ENCODE measurements at regions of chr18 and their contacts with region 1.

Region 1: GRCh38 chr18:50878345-50879301 is at the start of gene ME2:
- DNase-seq: peak; percentile 80 to 94 (median 91)
- ATAC-seq: peak; percentile 87
- H3K4me3 ChIP-seq: peak within 1 kb of the TSS; percentile 87 to 95
- H3K4me3 Mint-ChIP-seq: peak within 1 kb of the TSS; percentile 96
- H3K27ac ChIP-seq: peak within 1 kb of the TSS; percentile 89 to 99
- H3K27ac Mint-ChIP-seq: peak within 1 kb of the TSS; percentile 99
- H3K4me1 ChIP-seq: peaks cover 31% of the 10 kb centered on the region
- H3K4me1 Mint-ChIP-seq: peaks cover 37% of the 10 kb centered on the region
- H3K27me3 ChIP-seq: no peaks in the 10 kb centered on the region
- H3K27me3 Mint-ChIP-seq: no peaks in the 10 kb centered on the region
- CTCF ChIP-seq: no peak
- total RNA-seq, gene ME2: 14.4 to 17.3 TPM

Region 2: DNA sequence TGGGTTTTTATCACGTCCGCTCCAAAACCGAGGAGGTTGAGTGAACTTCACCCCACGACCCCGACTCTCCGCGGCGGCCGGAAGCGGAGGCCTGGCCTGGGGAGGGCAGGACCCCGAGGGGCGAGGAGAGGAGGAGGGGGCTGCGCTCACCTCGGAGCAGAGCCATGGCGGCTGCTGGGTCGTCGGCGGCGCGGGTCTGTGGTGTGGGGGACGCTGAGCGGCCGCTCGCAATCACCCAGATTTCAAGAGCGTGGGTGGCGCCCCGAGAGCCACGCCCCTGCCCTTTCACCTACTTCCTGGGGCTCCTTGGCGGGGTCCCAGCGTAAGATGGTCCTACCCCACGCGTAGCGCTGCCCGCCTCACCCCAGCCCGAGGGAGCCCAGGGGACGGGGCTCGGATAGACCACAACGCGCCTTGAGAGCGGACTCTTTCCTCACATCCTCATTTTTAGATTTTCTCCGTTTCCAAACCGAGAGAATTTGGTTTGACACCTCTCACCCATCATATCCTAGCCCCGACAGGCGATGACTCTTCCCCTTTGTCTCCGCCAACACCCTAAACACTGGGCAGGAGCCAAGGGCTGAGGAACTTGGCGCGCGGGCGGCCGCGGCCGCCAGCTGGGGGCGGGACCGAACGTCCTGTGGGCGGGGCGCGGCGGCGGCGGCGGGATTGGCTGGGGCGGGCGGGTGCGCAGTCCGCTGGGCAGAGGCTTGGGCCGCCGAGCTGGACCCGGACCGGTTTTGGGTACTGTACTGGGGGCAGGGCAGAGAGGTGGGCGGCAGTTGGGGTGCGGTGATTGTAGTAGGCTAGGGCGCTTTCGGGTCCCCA is 1065.1 kb before region 1 on chr18 and contains the start of gene ACAA2:
- CTCF ChIA-PET with region 1: no interaction called
- POLR2A ChIA-PET with region 1: no interaction called
- intact Hi-C with region 1: loop called in 1 of 2 experiments (anchors 10 kb)
- DNase-seq: peak; percentile 53 to 91 (median 77)
- ATAC-seq: peak; percentile 81
- H3K4me3 ChIP-seq: peak within 1 kb of the TSS; percentile 88 to 93
- H3K4me3 Mint-ChIP-seq: peak within 1 kb of the TSS; percentile 97
- H3K27ac ChIP-seq: peak within 1 kb of the TSS; percentile 90 to 95
- H3K27ac Mint-ChIP-seq: peak within 1 kb of the TSS; percentile 95
- H3K4me1 ChIP-seq: peaks cover 37% of the 10 kb centered on the region
- H3K4me1 Mint-ChIP-seq: peaks cover 62% of the 10 kb centered on the region
- H3K27me3 ChIP-seq: no peaks in the 10 kb centered on the region
- H3K27me3 Mint-ChIP-seq: no peaks in the 10 kb centered on the region
- CTCF ChIP-seq: no peak
- total RNA-seq, gene ACAA2: 9.5 to 10.0 TPM

Region 3: DNA sequence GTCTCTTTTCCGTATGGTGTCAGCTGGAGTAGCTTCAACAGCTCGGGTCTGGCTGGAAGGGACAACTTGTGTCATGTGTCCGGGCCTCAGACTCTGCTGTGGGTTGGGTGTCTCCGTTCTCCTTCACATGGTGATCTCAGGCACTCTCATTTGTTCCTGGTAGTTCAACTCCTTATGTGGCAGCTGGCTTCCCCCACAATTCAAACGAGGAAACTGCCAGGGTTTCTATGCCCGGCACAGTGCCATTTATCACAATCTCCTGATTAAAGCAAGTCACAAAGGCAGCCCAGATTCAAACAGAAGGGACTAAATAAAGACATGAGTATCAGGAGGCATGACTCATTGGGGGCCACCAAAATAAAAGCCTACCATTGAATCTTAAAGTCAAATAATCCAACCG is 81.5 kb before region 1 on chr18:
- CTCF ChIA-PET with region 1: no interaction called
- POLR2A ChIA-PET with region 1: no interaction called
- intact Hi-C with region 1: no loop called
- DNase-seq: no peak
- ATAC-seq: no peak
- H3K4me3 ChIP-seq: no peak overlapping the region
- H3K4me3 Mint-ChIP-seq: no peak overlapping the region
- H3K27ac ChIP-seq: no peak overlapping the region
- H3K27ac Mint-ChIP-seq: no peak overlapping the region
- H3K4me1 ChIP-seq: no peaks in the 10 kb centered on the region
- H3K4me1 Mint-ChIP-seq: no peaks in the 10 kb centered on the region
- H3K27me3 ChIP-seq: peaks cover 0 to 5% of the 10 kb centered on the region in 2 experiments
- H3K27me3 Mint-ChIP-seq: peaks cover 40% of the 10 kb centered on the region
- CTCF ChIP-seq: no peak

Region 4: DNA sequence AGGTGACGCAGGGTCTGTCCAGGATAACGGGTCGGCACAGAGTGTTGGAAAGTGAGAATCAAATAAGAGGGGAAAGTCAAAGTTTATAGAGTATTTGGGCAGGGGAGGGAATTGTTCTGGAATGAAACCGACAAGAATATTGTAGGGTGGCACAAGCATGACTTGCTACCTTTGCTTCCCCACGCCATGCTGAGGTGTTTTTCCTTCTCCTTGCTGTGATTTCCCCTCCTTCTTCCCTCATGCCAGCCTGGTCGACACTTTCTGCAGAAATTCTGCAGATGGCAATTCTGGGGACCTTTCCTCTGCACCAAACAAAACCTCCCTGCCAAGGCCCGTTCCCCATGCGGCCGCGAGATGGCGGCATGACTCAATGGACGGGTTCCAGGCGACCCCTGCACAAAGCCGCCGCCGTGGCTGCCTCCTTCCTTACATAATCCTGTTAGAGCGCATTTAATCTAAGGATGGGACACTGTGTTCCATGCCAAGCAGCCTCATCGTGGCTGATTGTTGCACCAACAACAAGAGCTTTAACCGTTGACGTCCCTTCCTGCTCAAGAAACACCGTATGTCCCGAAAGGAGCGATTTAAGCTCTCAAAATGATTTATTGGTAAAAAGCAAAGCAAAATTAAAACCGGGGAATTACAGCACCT is 58.8 kb before region 1 on chr18 and contains the start of gene MRO:
- CTCF ChIA-PET with region 1: interaction called, 4 read pairs
- POLR2A ChIA-PET with region 1: interaction called, 5 read pairs
- intact Hi-C with region 1: loop called (anchors 2 to 5 kb)
- DNase-seq: peak; percentile 60 to 88 (median 79)
- ATAC-seq: peak; percentile 100
- H3K4me3 ChIP-seq: peak within 1 kb of the TSS; percentile 36 to 42
- H3K4me3 Mint-ChIP-seq: no peak within 1 kb of the TSS
- H3K27ac ChIP-seq: no peak within 1 kb of the TSS
- H3K27ac Mint-ChIP-seq: no peak within 1 kb of the TSS
- H3K4me1 ChIP-seq: peaks cover 20% of the 10 kb centered on the region
- H3K4me1 Mint-ChIP-seq: no peaks in the 10 kb centered on the region
- H3K27me3 ChIP-seq: no peaks in the 10 kb centered on the region
- H3K27me3 Mint-ChIP-seq: peaks cover 9% of the 10 kb centered on the region
- CTCF ChIP-seq: peak; percentile 93
- total RNA-seq, gene MRO: not detected

Region 5: GRCh38 chr18:50967714-50968661 is 89.4 kb after region 1 on chr18 and contains the start of gene ELAC1:
- CTCF ChIA-PET with region 1: no interaction called
- POLR2A ChIA-PET with region 1: interaction called, 25 read pairs
- intact Hi-C with region 1: loop called (anchors 1 to 2 kb)
- DNase-seq: peak; percentile 37 to 85 (median 64)
- ATAC-seq: peak; percentile 85
- H3K4me3 ChIP-seq: peak within 1 kb of the TSS; percentile 67 to 71
- H3K4me3 Mint-ChIP-seq: peak within 1 kb of the TSS; percentile 94
- H3K27ac ChIP-seq: peak within 1 kb of the TSS; percentile 86 to 89
- H3K27ac Mint-ChIP-seq: peak within 1 kb of the TSS; percentile 96
- H3K4me1 ChIP-seq: peaks cover 15% of the 10 kb centered on the region
- H3K4me1 Mint-ChIP-seq: peaks cover 28% of the 10 kb centered on the region
- H3K27me3 ChIP-seq: no peaks in the 10 kb centered on the region
- H3K27me3 Mint-ChIP-seq: no peaks in the 10 kb centered on the region
- CTCF ChIP-seq: no peak
- total RNA-seq, gene ELAC1: 3.5 to 4.0 TPM

Region 6: DNA sequence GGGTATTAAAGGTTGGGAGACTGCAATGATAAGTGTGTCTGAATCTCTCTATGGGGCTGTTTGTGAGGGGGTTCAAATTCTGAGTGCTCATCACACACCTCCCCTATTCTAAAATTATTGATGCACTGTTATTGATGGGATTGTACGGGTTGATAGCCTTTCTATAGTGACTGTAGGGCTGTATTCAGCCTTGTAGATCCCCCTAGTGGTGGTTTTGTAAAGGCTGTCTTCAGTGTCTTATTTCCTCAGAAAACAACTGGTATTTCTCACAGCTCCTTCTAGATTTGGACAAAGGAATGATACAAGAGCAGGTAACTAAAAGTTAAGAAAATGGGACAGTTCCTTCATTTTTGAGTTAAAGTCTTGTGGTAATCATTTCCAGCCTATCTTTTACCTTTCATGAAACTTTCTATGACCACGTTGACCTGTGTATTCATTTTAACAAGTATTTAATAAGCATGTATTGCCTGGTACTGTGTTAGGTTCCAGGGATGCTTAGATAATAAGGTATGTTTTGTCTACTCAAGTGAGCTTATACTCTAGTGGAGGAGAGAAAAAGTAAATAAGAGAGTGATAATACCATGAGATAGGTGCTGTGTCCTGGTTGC is 172.6 kb after region 1 on chr18:
- CTCF ChIA-PET with region 1: no interaction called
- POLR2A ChIA-PET with region 1: interaction called, 4 read pairs
- intact Hi-C with region 1: loop called in 1 of 2 experiments (anchors 5 kb)
- DNase-seq: peak in 3 of 9 experiments; percentile 25 to 76 (median 67)
- ATAC-seq: peak; percentile 92
- H3K4me3 ChIP-seq: no peak overlapping the region
- H3K4me3 Mint-ChIP-seq: no peak overlapping the region
- H3K27ac ChIP-seq: no peak overlapping the region
- H3K27ac Mint-ChIP-seq: peak overlapping the region; percentile 34
- H3K4me1 ChIP-seq: peaks cover 12% of the 10 kb centered on the region
- H3K4me1 Mint-ChIP-seq: peaks cover 43% of the 10 kb centered on the region
- H3K27me3 ChIP-seq: no peaks in the 10 kb centered on the region
- H3K27me3 Mint-ChIP-seq: no peaks in the 10 kb centered on the region
- CTCF ChIP-seq: peak; percentile 80

Region 7: GRCh38 chr18:51197661-51198424 is 319.2 kb after region 1 on chr18 and contains the start of gene MEX3C:
- CTCF ChIA-PET with region 1: no interaction called
- POLR2A ChIA-PET with region 1: interaction called, 12 read pairs
- intact Hi-C with region 1: loop called (anchors 2 kb)
- DNase-seq: peak; percentile 97 to 99 (median 99)
- ATAC-seq: peak; percentile 82
- H3K4me3 ChIP-seq: peak within 1 kb of the TSS; percentile 83 to 96
- H3K4me3 Mint-ChIP-seq: peak within 1 kb of the TSS; percentile 96
- H3K27ac ChIP-seq: peak within 1 kb of the TSS; percentile 80
- H3K27ac Mint-ChIP-seq: peak within 1 kb of the TSS; percentile 95
- H3K4me1 ChIP-seq: peaks cover 24% of the 10 kb centered on the region
- H3K4me1 Mint-ChIP-seq: peaks cover 33% of the 10 kb centered on the region
- H3K27me3 ChIP-seq: no peaks in the 10 kb centered on the region
- H3K27me3 Mint-ChIP-seq: no peaks in the 10 kb centered on the region
- CTCF ChIP-seq: peak; percentile 34
- total RNA-seq, gene MEX3C: 78.7 to 83.3 TPM

Region 8: DNA sequence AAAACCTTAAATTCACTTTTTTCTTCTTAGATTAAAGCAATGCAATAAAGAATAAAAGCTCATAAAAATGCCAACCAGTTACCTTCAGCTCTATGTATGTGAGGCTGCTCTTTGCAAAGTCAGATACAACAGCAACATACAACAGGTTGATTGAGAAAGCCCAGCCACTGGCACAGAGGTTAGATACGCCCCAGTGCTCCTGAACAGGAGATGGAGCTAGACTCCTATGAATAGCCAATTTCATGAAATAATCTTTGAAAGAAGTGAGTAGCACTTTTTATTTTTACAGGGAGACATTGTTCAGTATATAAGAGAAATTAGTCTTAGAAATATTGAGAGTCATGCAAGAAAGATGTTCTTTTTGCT is 681.2 kb after region 1 on chr18:
- CTCF ChIA-PET with region 1: no interaction called
- POLR2A ChIA-PET with region 1: no interaction called
- intact Hi-C with region 1: no loop called
- DNase-seq: no peak
- ATAC-seq: no peak
- H3K4me3 ChIP-seq: no peak overlapping the region
- H3K4me3 Mint-ChIP-seq: no peak overlapping the region
- H3K27ac ChIP-seq: no peak overlapping the region
- H3K27ac Mint-ChIP-seq: no peak overlapping the region
- H3K4me1 ChIP-seq: no peaks in the 10 kb centered on the region
- H3K4me1 Mint-ChIP-seq: no peaks in the 10 kb centered on the region
- H3K27me3 ChIP-seq: no peaks in the 10 kb centered on the region
- H3K27me3 Mint-ChIP-seq: peaks cover 16% of the 10 kb centered on the region
- CTCF ChIP-seq: no peak

Measured in CD8-positive, alpha-beta T cell (primary cell).